ENCODE measurements at regions of chr16 and their contacts with region 1.

Region 1: DNA sequence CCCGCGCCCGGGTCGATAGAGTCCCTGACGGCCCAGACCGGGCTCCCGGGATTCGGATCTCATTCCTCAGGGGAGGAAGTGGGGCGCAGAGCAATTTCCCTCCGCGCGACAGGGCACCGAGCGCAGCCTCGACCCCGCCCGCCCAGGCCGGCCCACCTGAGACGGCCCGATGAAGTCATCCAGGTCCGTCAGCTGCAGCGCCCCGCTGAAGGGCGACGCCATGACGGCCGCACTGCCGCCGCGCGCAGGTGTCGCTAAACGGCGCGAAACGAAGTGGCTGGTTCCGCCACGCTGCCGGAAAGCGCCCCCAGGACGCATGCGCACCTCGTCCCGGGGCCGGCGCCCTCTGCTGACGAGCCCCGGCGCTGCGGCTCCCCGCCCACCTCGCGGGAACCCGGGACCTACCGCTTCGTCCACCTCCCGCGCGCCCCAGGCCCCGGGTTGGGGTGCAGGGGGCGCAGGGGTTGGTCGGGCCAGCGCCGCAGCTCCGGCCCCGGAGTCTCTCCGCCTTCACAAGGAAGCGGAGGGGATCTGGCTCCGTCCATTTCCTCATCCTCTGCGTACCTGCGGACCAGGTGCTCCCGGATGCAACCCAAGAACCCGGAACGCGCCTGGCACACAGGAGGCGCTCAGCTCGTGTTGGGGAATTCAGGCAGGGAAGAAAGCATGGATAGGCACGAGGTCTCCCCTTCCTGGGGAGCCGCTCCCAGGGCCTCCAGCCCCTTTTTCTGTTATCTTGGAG is at the start of gene CIAO3:
- DNase-seq: peak; percentile 98
- ATAC-seq: peak; percentile 89
- H3K4me3 Mint-ChIP-seq: peak within 1 kb of the TSS; percentile 83
- H3K27ac Mint-ChIP-seq: no peak within 1 kb of the TSS
- H3K4me1 Mint-ChIP-seq: peaks cover 32% of the 10 kb centered on the region
- H3K27me3 Mint-ChIP-seq: no peaks in the 10 kb centered on the region
- CTCF ChIP-seq: peak; percentile 54
- total RNA-seq, gene CIAO3: 42.4 and 43.1 TPM in 2 replicates

Region 2: DNA sequence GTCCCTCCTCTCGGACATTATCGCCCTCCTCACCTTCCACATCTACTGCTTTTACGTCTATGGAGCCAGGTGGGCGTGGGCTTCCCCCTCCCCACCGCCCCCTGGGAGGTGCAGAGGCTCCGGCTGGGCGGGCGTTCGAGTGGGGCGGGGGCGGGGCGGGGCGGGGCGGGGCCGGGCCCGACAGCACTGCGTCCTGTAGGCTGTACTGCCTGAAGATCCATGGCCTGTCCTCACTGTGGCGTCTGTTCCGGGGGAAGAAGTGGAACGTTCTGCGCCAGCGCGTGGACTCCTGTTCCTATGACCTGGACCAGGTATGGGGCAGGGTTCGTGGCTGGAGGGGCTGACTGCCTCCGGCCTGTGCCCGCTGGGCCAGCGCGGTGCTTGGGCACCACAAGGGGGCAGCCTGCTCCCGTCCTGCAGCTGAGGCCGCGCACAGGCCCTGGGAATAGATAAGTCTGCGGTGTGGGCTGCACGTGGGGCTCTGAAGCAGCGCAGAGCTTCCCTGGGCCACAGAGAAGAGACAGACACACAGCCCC is 162.0 kb before region 1 on chr16:
- CTCF ChIA-PET with region 1: no interaction called
- POLR2A ChIA-PET with region 1: interaction called, 3 read pairs
- intact Hi-C with region 1: loop called (anchors 2 kb)
- DNase-seq: peak; percentile 82
- ATAC-seq: peak; percentile 95
- H3K4me3 Mint-ChIP-seq: peak overlapping the region; percentile 50
- H3K27ac Mint-ChIP-seq: no peak overlapping the region
- H3K4me1 Mint-ChIP-seq: peaks cover 2% of the 10 kb centered on the region
- H3K27me3 Mint-ChIP-seq: no peaks in the 10 kb centered on the region
- CTCF ChIP-seq: no peak

Region 3: GRCh38 chr16:714558-715476 is 26.1 kb before region 1 on chr16 and contains the start of gene METRN:
- CTCF ChIA-PET with region 1: interaction called, 4 read pairs
- POLR2A ChIA-PET with region 1: interaction called, 31 read pairs
- intact Hi-C with region 1: loop called (anchors 1 kb)
- DNase-seq: peak; percentile 89
- ATAC-seq: peak; percentile 91
- H3K4me3 Mint-ChIP-seq: peak within 1 kb of the TSS; percentile 68
- H3K27ac Mint-ChIP-seq: no peak within 1 kb of the TSS
- H3K4me1 Mint-ChIP-seq: peaks cover 16% of the 10 kb centered on the region
- H3K27me3 Mint-ChIP-seq: peaks cover 7% of the 10 kb centered on the region
- CTCF ChIP-seq: no peak
- total RNA-seq, gene METRN: 5.0 and 6.7 TPM in 2 replicates

Region 4: DNA sequence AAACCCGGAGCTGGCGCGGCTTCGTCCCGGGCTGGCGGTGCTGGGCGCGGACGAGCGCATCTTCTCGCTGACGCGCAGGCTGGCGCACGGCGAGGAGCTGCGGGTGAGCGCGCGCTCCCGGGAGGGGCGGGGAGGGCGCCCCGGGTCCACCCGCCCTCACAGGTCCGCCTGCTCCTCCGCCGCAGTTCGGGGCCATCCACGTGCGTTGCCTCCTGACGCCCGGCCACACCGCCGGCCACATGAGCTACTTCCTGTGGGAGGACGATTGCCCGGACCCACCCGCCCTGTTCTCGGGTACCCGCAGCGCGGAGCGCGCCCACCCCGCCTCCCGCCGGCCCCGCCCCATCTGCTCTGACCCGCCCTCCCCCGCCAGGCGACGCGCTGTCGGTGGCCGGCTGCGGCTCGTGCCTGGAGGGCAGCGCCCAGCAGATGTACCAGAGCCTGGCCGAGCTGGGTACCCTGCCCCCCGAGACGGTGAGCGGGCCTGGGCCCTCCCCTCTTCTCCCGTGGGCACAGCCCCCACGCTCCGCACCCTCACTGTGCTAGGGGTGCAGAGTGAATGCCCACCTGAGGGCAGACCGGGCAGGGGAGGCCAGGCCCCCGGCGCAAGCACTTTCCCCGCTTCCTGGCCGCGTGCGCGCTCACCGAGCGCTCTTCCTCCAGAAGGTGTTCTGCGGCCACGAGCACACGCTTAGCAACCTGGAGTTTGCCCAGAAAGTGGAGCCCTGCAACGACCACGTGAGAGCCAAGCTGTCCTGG is 12.6 kb before region 1 on chr16:
- CTCF ChIA-PET with region 1: no interaction called
- POLR2A ChIA-PET with region 1: interaction called, 31 read pairs
- intact Hi-C with region 1: loop called (anchors 1 kb)
- DNase-seq: peak; percentile 71
- ATAC-seq: peak; percentile 66
- H3K4me3 Mint-ChIP-seq: peak overlapping the region; percentile 69
- H3K27ac Mint-ChIP-seq: no peak overlapping the region
- H3K4me1 Mint-ChIP-seq: peaks cover 4% of the 10 kb centered on the region
- H3K27me3 Mint-ChIP-seq: no peaks in the 10 kb centered on the region
- CTCF ChIP-seq: no peak

Region 5: DNA sequence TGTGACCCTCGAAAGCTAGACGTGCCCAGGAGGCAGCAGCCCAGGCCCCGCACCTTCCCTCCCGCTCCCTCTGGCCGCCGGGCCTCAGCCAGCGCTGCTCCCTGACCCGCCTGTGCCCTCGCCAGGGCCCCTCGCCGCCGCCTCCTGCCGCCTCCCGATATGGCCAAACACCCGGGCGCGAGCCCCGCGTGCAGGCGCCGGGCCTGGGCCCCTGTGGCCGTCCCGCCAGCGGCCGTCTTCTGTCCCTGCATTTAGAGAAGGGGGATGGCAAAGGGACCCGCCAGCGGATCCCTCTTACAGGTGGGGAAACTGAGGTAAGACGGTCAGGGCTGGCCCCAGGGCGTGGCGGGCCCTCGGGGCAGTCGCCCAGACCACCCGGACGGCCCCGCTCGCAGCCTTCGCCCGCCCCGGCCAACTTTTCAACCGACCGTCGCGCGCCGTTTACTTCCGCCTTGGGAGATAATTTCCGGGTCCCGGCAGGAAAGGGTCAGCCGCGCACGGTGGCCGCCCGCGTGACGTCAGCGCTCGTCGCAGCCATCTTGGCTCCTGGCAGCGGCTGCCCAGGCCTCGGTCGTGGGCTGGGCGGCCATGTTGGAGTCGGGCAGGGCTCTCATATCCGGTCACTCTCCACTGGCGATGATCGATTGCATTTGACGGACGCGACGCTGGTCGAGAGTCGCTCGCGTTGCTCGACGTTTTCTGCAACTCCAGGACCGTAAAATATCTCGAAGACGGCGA is 66.6 kb after region 1 on chr16:
- CTCF ChIA-PET with region 1: no interaction called
- POLR2A ChIA-PET with region 1: interaction called, 3 read pairs
- intact Hi-C with region 1: loop called (anchors 1 kb)
- DNase-seq: peak; percentile 79
- ATAC-seq: peak; percentile 95
- H3K4me3 Mint-ChIP-seq: peak overlapping the region; percentile 97
- H3K27ac Mint-ChIP-seq: peak overlapping the region; percentile 92
- H3K4me1 Mint-ChIP-seq: peaks cover 11% of the 10 kb centered on the region
- H3K27me3 Mint-ChIP-seq: peaks cover 11% of the 10 kb centered on the region
- CTCF ChIP-seq: no peak